ENCODE measurements at regions of chr1 and their contacts with region 1.

Region 1: GRCh38 chr1:246002725-246003441 is 504.2 kb downstream of the SMYD3 start:
- DNase-seq: peak; percentile 73
- ATAC-seq: peak; percentile 87
- H3K4me3 ChIP-seq: no peak overlapping the region
- H3K27ac ChIP-seq: no peak overlapping the region
- H3K4me1 ChIP-seq: peaks cover 11 to 23% of the 10 kb centered on the region in 2 experiments
- H3K27me3 ChIP-seq: no peaks in the 10 kb centered on the region
- CTCF ChIP-seq: peak; percentile 74 to 88 (median 78)
- POLR2A ChIP-seq: no peak
- RAD21 ChIP-seq: peak; percentile 96

Region 2: DNA sequence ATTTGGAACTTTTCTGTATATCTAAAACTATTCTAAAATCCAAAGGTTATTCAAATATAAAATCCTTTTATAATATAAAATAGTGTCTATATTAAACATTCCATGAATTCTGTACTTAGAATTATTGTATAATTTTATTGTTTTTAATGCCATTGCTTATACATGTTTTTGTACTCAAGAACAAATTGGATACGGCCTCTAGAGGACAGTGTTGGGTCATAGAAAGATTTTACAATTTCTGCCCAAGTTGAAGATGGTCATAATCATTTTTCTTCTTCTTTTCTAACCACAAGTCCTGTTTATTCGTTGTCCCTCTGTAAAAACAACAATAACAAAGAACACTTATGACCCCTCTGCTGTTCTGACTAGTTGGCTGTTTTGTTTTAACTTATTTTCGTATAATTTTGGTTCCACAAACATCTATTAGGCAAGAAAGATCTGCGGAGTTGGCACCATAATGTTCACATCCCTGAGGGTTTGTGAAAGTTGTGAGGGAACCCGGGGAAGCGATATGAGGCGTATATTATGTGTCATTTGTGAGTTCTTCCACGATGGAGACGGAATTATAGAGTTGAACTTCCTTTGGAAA is 923.8 kb before region 1 on chr1:
- CTCF ChIA-PET with region 1: interaction called, 3 read pairs
- POLR2A ChIA-PET with region 1: no interaction called
- RAD21 ChIA-PET with region 1: no interaction called
- intact Hi-C with region 1: loop called (anchors 1 kb)
- DNase-seq: peak; percentile 57
- ATAC-seq: 0 out of 2 replicates have a peak, but pooled peaks have one; percentile 53
- H3K4me3 ChIP-seq: no peak overlapping the region
- H3K27ac ChIP-seq: no peak overlapping the region
- H3K4me1 ChIP-seq: no peaks in the 10 kb centered on the region
- H3K27me3 ChIP-seq: no peaks in the 10 kb centered on the region
- CTCF ChIP-seq: peak; percentile 71 to 81 (median 78)
- POLR2A ChIP-seq: no peak
- RAD21 ChIP-seq: peak; percentile 89

Region 3: GRCh38 chr1:245380790-245381535 is 621.9 kb before region 1 on chr1:
- CTCF ChIA-PET with region 1: no interaction called
- POLR2A ChIA-PET with region 1: no interaction called
- RAD21 ChIA-PET with region 1: no interaction called
- intact Hi-C with region 1: loop called (anchors 5 kb)
- DNase-seq: peak; percentile 6
- ATAC-seq: no peak
- H3K4me3 ChIP-seq: no peak overlapping the region
- H3K27ac ChIP-seq: no peak overlapping the region
- H3K4me1 ChIP-seq: peaks cover 0 to 3% of the 10 kb centered on the region in 2 experiments; a peak in 1 of 4 replicates
- H3K27me3 ChIP-seq: peaks cover 21% of the 10 kb centered on the region
- CTCF ChIP-seq: peak; percentile 30 to 45 (median 43); a peak in 4 of 6 replicates
- POLR2A ChIP-seq: no peak
- RAD21 ChIP-seq: peak; percentile 59

Region 4: GRCh38 chr1:245858722-245859492 is 144.0 kb before region 1 on chr1:
- CTCF ChIA-PET with region 1: no interaction called
- POLR2A ChIA-PET with region 1: no interaction called
- RAD21 ChIA-PET with region 1: no interaction called
- intact Hi-C with region 1: no loop called
- DNase-seq: no peak
- ATAC-seq: 0 out of 2 replicates have a peak, but pooled peaks have one; percentile 50
- H3K4me3 ChIP-seq: no peak overlapping the region
- H3K27ac ChIP-seq: no peak overlapping the region
- H3K4me1 ChIP-seq: peaks cover 0 to 25% of the 10 kb centered on the region in 2 experiments; a peak in 1 of 4 replicates
- H3K27me3 ChIP-seq: no peaks in the 10 kb centered on the region
- CTCF ChIP-seq: peak in 2 of 3 experiments; percentile 46 to 51; a peak in 4 of 6 replicates
- POLR2A ChIP-seq: no peak
- RAD21 ChIP-seq: peak; percentile 29; the same call in 1 of the 2 replicates

Region 5: DNA sequence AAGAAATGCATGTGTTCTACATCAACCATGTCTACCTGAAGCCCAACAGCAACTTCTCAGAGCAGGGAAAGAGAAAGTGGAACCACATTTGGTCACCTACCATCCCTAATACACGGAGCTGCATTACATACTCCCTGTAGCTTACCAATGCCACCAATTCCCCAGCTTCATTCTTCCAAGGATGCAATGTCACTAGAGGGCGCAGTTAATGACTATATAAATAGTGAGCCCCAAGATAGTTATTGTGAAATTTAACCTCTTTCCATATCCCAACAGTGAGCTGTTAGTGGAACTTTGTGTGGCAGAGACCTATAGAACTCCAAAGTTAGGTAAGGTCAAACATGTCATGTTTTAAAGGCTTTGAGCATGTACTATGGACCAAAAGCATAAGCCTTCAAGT is 114.1 kb before region 1 on chr1:
- CTCF ChIA-PET with region 1: interaction called, 8 read pairs
- POLR2A ChIA-PET with region 1: no interaction called
- RAD21 ChIA-PET with region 1: interaction called in 1 of 2 experiments, 3 read pairs
- intact Hi-C with region 1: loop called (anchors 5 kb)
- DNase-seq: peak; percentile 23
- ATAC-seq: peak; percentile 83
- H3K4me3 ChIP-seq: no peak overlapping the region
- H3K27ac ChIP-seq: no peak overlapping the region
- H3K4me1 ChIP-seq: no peaks in the 10 kb centered on the region
- H3K27me3 ChIP-seq: no peaks in the 10 kb centered on the region
- CTCF ChIP-seq: peak; percentile 35 to 70 (median 59); a peak in 5 of 6 replicates
- POLR2A ChIP-seq: no peak
- RAD21 ChIP-seq: peak; percentile 40

Region 6: DNA sequence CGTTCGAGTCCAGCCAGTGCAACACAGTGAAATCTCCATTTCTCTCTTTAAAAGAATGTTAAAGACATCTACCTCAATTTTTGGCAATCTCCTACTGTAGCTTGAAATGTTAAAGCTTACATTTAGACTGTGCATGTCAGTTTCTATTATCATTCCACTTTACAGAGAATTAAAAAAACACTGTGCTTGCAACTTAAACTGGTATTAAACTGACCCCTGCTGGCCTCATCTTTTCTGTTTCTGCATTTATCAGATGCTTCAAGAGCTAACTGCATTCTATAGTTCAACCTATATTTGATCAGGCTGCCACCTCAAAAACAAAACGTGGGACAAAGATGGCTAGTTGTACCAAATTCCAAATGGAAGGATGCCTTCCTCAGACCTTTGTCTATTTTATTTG is 277.7 kb after region 1 on chr1:
- CTCF ChIA-PET with region 1: no interaction called
- POLR2A ChIA-PET with region 1: no interaction called
- RAD21 ChIA-PET with region 1: no interaction called
- intact Hi-C with region 1: loop called (anchors 2 kb)
- DNase-seq: peak; percentile 10
- ATAC-seq: peak; percentile 50; the same call in 1 of the 2 replicates
- H3K4me3 ChIP-seq: no peak overlapping the region
- H3K27ac ChIP-seq: no peak overlapping the region
- H3K4me1 ChIP-seq: no peaks in the 10 kb centered on the region
- H3K27me3 ChIP-seq: no peaks in the 10 kb centered on the region
- CTCF ChIP-seq: peak; percentile 22 to 44 (median 43); a peak in 3 of 6 replicates
- POLR2A ChIP-seq: no peak
- RAD21 ChIP-seq: peak; percentile 70